CD8-positive, alpha-beta T cell (primary cell): ENCODE measurements at regions of chr18 and their contacts with region 1.

Region 1: GRCh38 chr18:71209944-71210343 is 921.1 kb downstream of the SOCS6 start:
- DNase-seq: no peak
- ATAC-seq: no peak
- H3K4me3 ChIP-seq: no peak overlapping the region
- H3K4me3 Mint-ChIP-seq: no peak overlapping the region
- H3K27ac ChIP-seq: no peak overlapping the region
- H3K27ac Mint-ChIP-seq: no peak overlapping the region
- H3K4me1 ChIP-seq: no peaks in the 10 kb centered on the region
- H3K4me1 Mint-ChIP-seq: no peaks in the 10 kb centered on the region
- H3K27me3 ChIP-seq: no peaks in the 10 kb centered on the region
- H3K27me3 Mint-ChIP-seq: no peaks in the 10 kb centered on the region
- CTCF ChIP-seq: no peak

Region 2: DNA sequence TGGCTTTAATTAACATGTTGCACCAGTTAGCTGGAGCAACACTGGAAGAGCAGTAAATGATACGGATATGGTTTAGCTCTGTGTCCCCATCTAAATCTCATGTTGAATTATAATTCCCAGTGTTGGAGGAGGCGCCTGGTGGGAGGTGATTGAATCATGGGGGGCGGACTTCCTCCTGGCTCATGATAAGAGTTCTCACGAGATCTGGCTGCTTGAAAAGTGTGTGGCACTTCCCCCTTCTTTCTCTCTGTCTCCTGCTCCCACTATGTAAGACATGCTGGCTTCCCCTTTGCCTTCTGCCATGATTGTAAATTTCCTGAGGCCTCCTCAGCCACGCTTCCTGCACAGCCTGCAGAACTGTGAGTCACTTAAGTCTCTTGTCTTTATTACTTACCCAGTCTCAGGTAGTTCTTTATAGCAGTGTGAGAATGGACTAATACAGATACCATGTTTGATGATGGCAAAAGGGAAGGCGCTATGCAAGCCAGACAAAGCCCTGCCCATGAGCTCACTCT is 42.5 kb after region 1 on chr18:
- CTCF ChIA-PET with region 1: no interaction called
- POLR2A ChIA-PET with region 1: no interaction called
- intact Hi-C with region 1: loop called in 1 of 2 experiments (anchors 5 kb)
- DNase-seq: no peak
- ATAC-seq: no peak
- H3K4me3 ChIP-seq: no peak overlapping the region
- H3K4me3 Mint-ChIP-seq: no peak overlapping the region
- H3K27ac ChIP-seq: no peak overlapping the region
- H3K27ac Mint-ChIP-seq: no peak overlapping the region
- H3K4me1 ChIP-seq: no peaks in the 10 kb centered on the region
- H3K4me1 Mint-ChIP-seq: no peaks in the 10 kb centered on the region
- H3K27me3 ChIP-seq: no peaks in the 10 kb centered on the region
- H3K27me3 Mint-ChIP-seq: no peaks in the 10 kb centered on the region
- CTCF ChIP-seq: no peak